WTC11 (cell line): ENCODE measurements at regions of chr19 and their contacts with region 1.

Region 1: DNA sequence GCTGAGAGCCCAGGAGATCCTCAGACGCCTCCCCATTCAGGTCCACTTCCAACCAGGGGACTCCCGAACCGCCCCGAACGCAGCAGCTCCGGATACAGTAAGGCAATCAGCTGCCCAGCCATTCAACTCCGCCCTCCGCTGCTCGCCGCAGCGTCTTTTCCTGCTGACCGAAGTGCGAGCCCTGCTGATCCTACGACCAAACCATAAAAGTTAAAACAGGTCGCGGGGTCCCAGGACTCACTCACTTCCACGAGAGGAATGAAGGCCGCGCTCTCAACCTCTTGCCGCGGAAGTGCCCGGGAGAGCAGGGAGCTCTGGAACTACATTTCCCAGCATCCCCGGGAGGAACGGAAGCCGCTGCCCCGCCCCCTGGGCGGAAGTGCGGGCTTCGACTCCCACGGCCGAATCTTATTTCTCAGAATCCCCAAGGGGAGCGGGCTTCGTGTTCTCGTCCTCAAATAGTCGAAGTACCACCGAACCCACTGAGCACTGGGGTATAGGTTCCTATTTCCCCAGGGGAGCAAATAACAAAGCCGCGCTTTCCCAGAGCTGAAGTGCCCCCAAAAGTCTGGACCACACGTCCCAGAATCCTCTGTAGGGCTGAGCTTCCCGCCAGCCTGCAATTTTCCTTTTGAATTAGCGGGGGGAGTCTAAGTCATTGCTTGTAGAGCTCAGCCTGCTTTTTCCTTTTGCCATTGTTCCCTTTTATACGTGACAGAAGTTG is at the start of gene ZNF45:
- DNase-seq: peak; percentile 83
- ATAC-seq: peak; percentile 94
- H3K4me3 Mint-ChIP-seq: peak within 1 kb of the TSS; percentile 92
- H3K27ac Mint-ChIP-seq: 0 out of 2 replicates have a peak within 1 kb of the TSS, but pooled peaks have one; percentile 45
- H3K4me1 Mint-ChIP-seq: peaks cover 6% of the 10 kb centered on the region
- H3K27me3 Mint-ChIP-seq: peaks cover 22% of the 10 kb centered on the region
- CTCF ChIP-seq: no peak
- total RNA-seq, gene ZNF45: 10.1 to 12.2 TPM (median 11.0 TPM) in 3 replicates

Region 2: DNA sequence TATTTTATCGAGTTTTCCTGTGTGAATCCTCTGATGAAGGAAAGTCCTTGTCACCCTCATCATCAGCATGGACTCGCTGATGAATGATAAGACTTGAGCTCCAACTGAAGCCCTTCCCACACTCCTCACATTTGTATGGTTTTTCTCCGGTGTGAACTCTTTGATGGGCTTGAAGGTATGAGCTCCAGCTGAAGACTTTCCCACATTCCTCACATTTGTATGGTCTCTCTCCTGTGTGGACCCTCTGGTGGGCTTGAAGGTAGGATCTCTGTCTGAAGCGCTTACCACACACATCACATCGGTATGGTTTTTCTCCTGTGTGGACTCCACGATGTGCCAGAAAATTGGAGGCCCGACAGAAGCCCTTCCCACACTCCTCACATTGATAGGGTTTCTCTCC is 21.8 kb before region 1 on chr19:
- CTCF ChIA-PET with region 1: no interaction called
- POLR2A ChIA-PET with region 1: no interaction called
- DNase-seq: no peak
- ATAC-seq: no peak
- H3K4me3 Mint-ChIP-seq: no peak overlapping the region
- H3K27ac Mint-ChIP-seq: no peak overlapping the region
- H3K4me1 Mint-ChIP-seq: no peaks in the 10 kb centered on the region
- H3K27me3 Mint-ChIP-seq: peaks cover 17% of the 10 kb centered on the region
- CTCF ChIP-seq: no peak

Region 3: GRCh38 chr19:43950834-43951645 is 15.9 kb after region 1 on chr19 and contains the start of gene ZNF221:
- CTCF ChIA-PET with region 1: interaction called, 20 read pairs
- POLR2A ChIA-PET with region 1: interaction called, 3 read pairs
- DNase-seq: peak; percentile 86
- ATAC-seq: peak; percentile 98
- H3K4me3 Mint-ChIP-seq: peak within 1 kb of the TSS; percentile 100
- H3K27ac Mint-ChIP-seq: peak within 1 kb of the TSS; percentile 94; the same call in 1 of the 2 replicates
- H3K4me1 Mint-ChIP-seq: peaks cover 6% of the 10 kb centered on the region
- H3K27me3 Mint-ChIP-seq: peaks cover 31% of the 10 kb centered on the region
- CTCF ChIP-seq: no peak
- total RNA-seq, gene ZNF221: 7.0 to 7.6 TPM (median 7.2 TPM) in 3 replicates